Prostate gland (tissue), 2 donors: ENCODE measurements at regions of chr10 and their contacts with region 1.

Region 1: GRCh38 chr10:102399217-102400089 is 3.9 kb downstream of the NFKB2 start:
- DNase-seq: peak; percentile 85
- H3K4me3 ChIP-seq: peak overlapping the region; percentile 49 to 52
- H3K27ac ChIP-seq: peak overlapping the region; percentile 86 to 89
- H3K4me1 ChIP-seq: peaks cover 6% of the 10 kb centered on the region
- H3K27me3 ChIP-seq: no peaks in the 10 kb centered on the region
- CTCF ChIP-seq: peak; percentile 90 to 98 (median 97)
- POLR2A ChIP-seq: peak; percentile 73

Region 2: GRCh38 chr10:102167861-102168260 is 231.6 kb before region 1 on chr10:
- intact Hi-C with region 1: loop called (anchors 2 kb)
- DNase-seq: no peak
- H3K4me3 ChIP-seq: no peak overlapping the region
- H3K27ac ChIP-seq: no peak overlapping the region
- H3K4me1 ChIP-seq: no peaks in the 10 kb centered on the region
- H3K27me3 ChIP-seq: no peaks in the 10 kb centered on the region
- CTCF ChIP-seq: no peak
- POLR2A ChIP-seq: no peak

Region 3: DNA sequence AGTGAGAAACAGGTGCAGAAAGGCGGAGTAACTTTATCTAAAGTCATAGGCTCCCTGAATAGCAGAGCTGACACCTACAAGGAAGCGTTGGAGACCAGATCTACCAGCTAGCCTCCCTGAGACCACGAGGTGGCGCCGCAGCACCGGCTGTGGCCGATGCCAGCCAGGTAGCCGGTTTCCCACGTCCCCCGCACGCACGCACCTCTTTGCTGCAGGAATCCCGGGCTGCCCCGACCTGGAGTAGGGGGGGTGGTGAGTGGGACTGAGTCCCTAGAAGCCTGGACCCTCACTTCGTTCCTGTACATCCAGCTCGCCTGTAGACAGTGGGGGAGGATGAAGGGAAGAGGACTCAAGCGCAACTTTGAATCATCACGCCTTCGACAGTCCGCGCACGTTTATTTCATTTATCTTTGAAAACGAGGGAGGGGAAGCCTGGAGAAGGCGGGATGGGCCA is 169.6 kb before region 1 on chr10:
- intact Hi-C with region 1: loop called (anchors 2 kb)
- DNase-seq: peak; percentile 84
- H3K4me3 ChIP-seq: peak overlapping the region; percentile 27 to 40
- H3K27ac ChIP-seq: no peak overlapping the region
- H3K4me1 ChIP-seq: no peaks in the 10 kb centered on the region
- H3K27me3 ChIP-seq: no peaks in the 10 kb centered on the region
- CTCF ChIP-seq: peak; percentile 84 to 95 (median 92)
- POLR2A ChIP-seq: no peak

Region 4: GRCh38 chr10:102241444-102242117 is 157.9 kb before region 1 on chr10 and contains the start of gene PITX3:
- intact Hi-C with region 1: loop called (anchors 5 kb)
- DNase-seq: peak; percentile 82
- H3K4me3 ChIP-seq: peak within 1 kb of the TSS; percentile 36 to 49
- H3K27ac ChIP-seq: no peak within 1 kb of the TSS
- H3K4me1 ChIP-seq: peaks cover 6% of the 10 kb centered on the region
- H3K27me3 ChIP-seq: no peaks in the 10 kb centered on the region
- CTCF ChIP-seq: peak in 1 of 4 experiments; percentile 5
- POLR2A ChIP-seq: peak; percentile 17
- total RNA-seq, gene PITX3: not detected

Region 5: DNA sequence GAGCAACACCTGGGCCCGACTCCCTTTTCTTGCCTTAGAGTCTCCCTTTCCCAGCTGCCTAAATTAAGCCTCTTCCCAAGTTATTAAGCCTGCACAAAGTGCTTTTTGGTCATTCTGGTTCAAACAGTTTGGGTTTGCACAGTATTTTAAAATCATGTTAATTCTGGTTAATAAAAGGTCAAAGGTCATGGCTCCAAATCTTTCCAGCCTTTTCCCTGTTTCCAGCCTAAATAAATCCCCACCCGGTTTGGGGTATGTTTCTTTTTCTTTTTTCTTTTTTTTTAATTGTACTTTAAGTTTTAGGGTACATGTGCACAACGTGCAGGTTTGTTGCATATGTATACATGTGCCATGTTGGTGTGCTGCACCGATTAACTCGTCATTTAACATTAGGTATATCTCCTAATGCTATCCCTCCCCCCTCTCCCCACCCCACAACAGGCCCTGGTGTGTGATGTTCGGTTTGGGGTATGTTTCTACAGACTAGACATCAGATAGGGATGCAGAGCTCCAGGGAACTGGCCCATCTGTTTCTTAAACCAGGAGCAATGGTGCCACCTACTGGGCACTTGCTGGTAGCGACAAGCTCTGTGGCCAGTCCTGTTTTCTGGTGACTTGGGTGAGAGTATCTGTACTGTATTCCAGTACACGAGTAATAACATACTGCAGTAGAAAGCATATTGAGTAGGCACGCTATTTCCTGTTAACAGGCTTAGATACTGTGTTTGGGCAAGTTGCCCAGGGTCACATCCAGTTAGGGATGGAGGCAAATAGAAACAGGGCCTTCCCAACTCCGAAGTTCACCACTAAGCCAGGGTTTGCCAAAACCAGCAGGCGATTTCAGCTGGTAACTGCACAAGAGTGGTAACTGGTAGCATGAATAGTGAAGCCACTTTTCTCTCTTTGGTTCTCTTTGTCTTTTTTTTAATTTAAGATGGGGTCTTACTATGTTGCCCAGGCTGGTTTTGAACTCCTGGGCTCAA is 184.3 kb after region 1 on chr10:
- intact Hi-C with region 1: loop called (anchors 5 kb)
- DNase-seq: peak; percentile 82
- H3K4me3 ChIP-seq: no peak overlapping the region
- H3K27ac ChIP-seq: no peak overlapping the region
- H3K4me1 ChIP-seq: peaks cover 10% of the 10 kb centered on the region
- H3K27me3 ChIP-seq: no peaks in the 10 kb centered on the region
- CTCF ChIP-seq: peak; percentile 59 to 88 (median 84)
- POLR2A ChIP-seq: no peak